ENCODE measurements at regions of chr5 and their contacts with region 1.

Region 1: DNA sequence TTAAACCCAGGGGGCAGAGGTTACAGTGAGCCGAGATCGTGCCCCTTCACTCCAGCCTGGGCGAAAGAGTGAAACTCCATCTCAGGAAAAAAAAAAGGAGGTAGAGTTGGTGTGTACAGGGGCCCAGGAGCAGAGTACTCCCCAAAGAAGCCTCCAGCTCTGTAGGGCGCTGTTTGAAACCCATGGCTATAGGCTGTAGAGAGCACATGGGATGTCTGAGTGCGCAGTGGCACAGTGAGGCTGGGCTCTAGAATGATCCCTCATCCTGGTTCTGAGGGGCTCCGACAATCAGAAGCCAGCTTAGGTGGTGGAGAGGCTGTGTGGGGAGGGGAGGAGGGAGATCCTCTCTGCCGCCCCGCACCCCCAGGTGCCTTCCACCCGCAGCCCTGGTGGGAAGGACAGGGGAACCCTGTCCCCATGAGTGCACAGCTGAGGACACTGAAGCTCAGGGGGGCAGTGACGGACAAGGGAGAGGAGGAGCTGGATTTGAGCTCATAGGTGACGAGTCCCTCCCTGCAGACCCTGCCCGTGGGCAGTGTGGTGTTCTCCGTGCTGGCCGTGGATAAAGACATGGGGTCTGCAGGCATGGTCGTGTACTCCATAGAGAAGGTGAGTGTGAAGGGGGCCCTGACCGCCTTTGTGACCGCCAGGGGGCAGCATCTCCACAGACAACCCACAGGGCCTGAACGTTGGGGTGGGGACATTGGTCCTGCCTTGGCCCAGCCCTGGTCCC is 24.6 kb downstream of the CDHR2 start:
- DNase-seq: peak; percentile 61 to 84 (median 70)
- H3K4me3 ChIP-seq: no peak overlapping the region
- H3K4me3 Mint-ChIP-seq: peak overlapping the region in 1 of 7 donors; percentile 34
- H3K27ac ChIP-seq: no peak overlapping the region
- H3K27ac Mint-ChIP-seq: peak overlapping the region in 2 of 8 donors; percentile 20 to 74
- H3K4me1 ChIP-seq: no peaks in the 10 kb centered on the region
- H3K4me1 Mint-ChIP-seq: peaks cover 4 to 11% (median 5%) of the 10 kb centered on the region in 3 donors
- H3K27me3 ChIP-seq: no peaks in the 10 kb centered on the region
- H3K27me3 Mint-ChIP-seq: peaks cover 10 to 12% of the 10 kb centered on the region in 2 donors

Region 2: GRCh38 chr5:176415952-176416924 is 157.5 kb before region 1 on chr5 and contains the start of gene CLTB:
- CTCF ChIA-PET with region 1: interaction called, 67 read pairs
- POLR2A ChIA-PET with region 1: no interaction called
- DNase-seq: peak; percentile 82 to 93 (median 90)
- H3K4me3 ChIP-seq: peak within 1 kb of the TSS; percentile 82
- H3K4me3 Mint-ChIP-seq: peak within 1 kb of the TSS; percentile 81 to 92 (median 89)
- H3K27ac ChIP-seq: peak within 1 kb of the TSS; percentile 71
- H3K27ac Mint-ChIP-seq: peak within 1 kb of the TSS; percentile 81 to 96 (median 93)
- H3K4me1 ChIP-seq: peaks cover 25% of the 10 kb centered on the region
- H3K4me1 Mint-ChIP-seq: peaks cover 41 to 51% (median 42%) of the 10 kb centered on the region in 3 donors
- H3K27me3 ChIP-seq: no peaks in the 10 kb centered on the region
- H3K27me3 Mint-ChIP-seq: no peaks in the 10 kb centered on the region
- total RNA-seq, gene CLTB: 62.0 to 66.4 TPM

Region 3: GRCh38 chr5:176537608-176538504 is 35.9 kb before region 1 on chr5:
- CTCF ChIA-PET with region 1: interaction called, 15 read pairs
- POLR2A ChIA-PET with region 1: no interaction called
- DNase-seq: peak; percentile 96 to 99 (median 97)
- H3K4me3 ChIP-seq: peak overlapping the region; percentile 99
- H3K4me3 Mint-ChIP-seq: peak overlapping the region; percentile 98 to 100 (median 99)
- H3K27ac ChIP-seq: peak overlapping the region; percentile 100
- H3K27ac Mint-ChIP-seq: peak overlapping the region; percentile 98 to 100 (median 99)
- H3K4me1 ChIP-seq: peaks cover 74% of the 10 kb centered on the region
- H3K4me1 Mint-ChIP-seq: peaks cover 72 to 77% (median 76%) of the 10 kb centered on the region in 3 donors
- H3K27me3 ChIP-seq: no peaks in the 10 kb centered on the region
- H3K27me3 Mint-ChIP-seq: peaks cover 0 to 9% of the 10 kb centered on the region in 2 donors

Region 4: DNA sequence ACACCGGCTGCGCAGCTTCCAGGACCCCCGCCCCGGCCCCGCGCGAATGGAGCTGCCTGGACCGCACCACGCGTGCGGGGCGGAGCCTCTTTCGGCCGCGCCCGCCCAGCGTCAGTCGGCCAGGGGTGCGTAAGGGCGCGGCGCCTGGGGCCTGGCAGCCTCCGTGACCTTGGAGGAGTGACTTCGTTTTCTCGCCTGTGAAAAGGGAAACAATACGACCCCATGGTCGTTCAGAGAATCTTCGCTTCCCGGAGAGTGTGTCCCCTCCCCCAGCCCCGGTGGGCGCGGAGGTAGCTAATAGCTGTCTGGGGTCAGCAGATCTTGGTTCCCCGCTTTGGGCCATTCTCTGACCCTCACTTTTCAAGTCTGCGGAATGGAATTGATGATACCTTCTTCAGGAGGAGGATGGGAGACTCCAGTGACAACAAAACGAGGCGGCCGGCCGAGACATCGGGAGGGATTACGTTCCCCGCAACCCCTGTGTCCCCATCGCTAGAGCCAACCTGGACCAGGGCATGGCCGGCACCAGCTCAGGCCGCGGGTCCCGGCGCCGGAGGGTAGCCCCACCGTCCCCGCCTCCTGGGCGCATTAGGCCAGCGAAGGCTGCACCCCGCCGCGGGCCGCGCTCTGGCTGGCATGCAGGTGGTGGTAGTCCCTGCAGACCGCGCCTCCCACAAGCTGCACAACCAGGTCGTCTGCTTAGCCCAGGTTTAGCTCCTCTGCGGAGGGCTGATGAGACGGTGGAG is 30.1 kb before region 1 on chr5:
- CTCF ChIA-PET with region 1: interaction called, 14 read pairs
- POLR2A ChIA-PET with region 1: interaction called, 4 read pairs
- DNase-seq: peak; percentile 60 to 82 (median 74)
- H3K4me3 ChIP-seq: peak overlapping the region; percentile 92
- H3K4me3 Mint-ChIP-seq: peak overlapping the region; percentile 92 to 97 (median 93)
- H3K27ac ChIP-seq: peak overlapping the region; percentile 85
- H3K27ac Mint-ChIP-seq: peak overlapping the region; percentile 96 to 99 (median 98)
- H3K4me1 ChIP-seq: peaks cover 69% of the 10 kb centered on the region
- H3K4me1 Mint-ChIP-seq: peaks cover 65 to 82% (median 74%) of the 10 kb centered on the region in 3 donors
- H3K27me3 ChIP-seq: no peaks in the 10 kb centered on the region
- H3K27me3 Mint-ChIP-seq: peaks cover 0 to 1% of the 10 kb centered on the region in 2 donors

Region 5: DNA sequence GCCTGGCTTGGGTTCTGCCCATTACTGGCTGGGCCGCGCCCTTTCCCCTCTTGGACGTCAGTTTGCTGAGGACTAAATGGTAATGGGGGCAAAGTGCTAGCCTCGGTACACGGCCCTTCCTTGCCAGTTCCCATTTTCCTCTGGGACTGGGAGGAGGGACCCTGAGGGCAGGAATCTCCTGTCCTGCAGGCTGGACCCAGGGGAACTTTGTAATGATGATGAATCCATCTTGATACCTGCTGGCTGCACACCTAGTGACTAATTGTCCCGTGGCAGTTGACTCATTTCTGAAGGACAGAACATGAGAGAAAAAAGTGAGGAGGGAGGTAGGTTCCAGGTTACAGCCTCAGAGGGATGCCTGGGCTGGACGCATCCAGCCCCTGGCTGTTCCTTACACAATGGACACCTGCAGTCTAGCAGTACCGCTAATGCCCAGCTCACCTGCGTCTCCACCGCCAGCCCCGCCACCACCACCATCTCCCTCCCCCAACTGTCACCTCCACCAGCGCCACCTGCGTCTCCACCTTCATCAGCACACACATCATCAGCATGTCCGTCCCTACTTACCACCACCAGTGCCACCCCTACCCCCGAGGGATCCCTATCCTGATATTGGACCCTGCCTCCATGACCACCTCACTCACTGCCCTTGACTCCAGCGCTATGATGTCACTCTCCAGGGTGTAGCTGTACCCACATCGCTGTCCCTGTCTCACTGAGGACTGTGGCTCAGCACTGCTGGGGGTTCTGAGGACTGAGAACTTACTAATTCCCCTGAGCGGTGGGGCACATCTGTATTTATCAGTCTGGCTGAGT is 20.3 kb before region 1 on chr5:
- CTCF ChIA-PET with region 1: interaction called, 10 read pairs
- POLR2A ChIA-PET with region 1: no interaction called
- DNase-seq: no peak
- H3K4me3 ChIP-seq: no peak overlapping the region
- H3K4me3 Mint-ChIP-seq: peak overlapping the region in 3 of 7 donors; percentile 14 to 61 (median 38)
- H3K27ac ChIP-seq: no peak overlapping the region
- H3K27ac Mint-ChIP-seq: peak overlapping the region in 7 of 8 donors; percentile 33 to 95 (median 47)
- H3K4me1 ChIP-seq: peaks cover 53% of the 10 kb centered on the region
- H3K4me1 Mint-ChIP-seq: peaks cover 37 to 65% (median 39%) of the 10 kb centered on the region in 3 donors
- H3K27me3 ChIP-seq: no peaks in the 10 kb centered on the region
- H3K27me3 Mint-ChIP-seq: no peaks in the 10 kb centered on the region

Region 6: DNA sequence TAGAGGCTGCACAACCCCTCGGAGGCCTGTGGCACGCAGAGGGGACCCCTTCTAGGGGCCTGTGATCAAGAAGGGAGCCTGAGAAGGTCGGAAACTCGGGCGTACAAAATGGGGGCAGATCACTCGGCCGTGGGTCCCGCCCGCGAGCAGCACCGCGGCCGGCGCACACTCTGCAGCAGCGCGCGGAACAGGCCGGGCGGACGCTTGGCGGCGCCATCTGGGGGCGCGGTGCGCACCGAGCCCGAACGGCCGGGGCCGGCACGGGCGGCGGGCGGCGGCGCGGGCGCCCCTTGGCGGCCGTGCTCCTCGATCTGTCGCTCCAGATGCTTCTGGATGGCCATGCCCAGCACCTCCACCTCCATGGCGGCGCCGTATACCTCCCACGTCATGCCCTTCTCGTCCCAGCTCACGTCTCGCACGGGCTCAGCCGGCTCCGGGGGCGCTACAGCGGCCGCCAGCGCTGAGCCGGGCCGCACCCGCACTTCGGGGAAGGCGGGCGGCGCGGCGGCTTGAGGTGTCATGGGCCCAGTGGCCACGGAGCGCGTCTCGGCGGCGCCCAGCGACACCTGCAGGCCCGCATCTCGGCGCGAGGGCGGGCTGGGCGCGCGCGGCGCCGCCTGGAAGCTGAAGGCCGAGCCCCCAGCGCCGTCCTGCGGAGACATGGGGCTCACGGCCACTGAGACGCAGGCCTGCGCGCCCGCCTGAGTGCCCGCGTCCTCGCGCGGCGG is 23.1 kb after region 1 on chr5:
- CTCF ChIA-PET with region 1: interaction called, 11 read pairs
- POLR2A ChIA-PET with region 1: no interaction called
- DNase-seq: peak; percentile 44 to 76 (median 70)
- H3K4me3 ChIP-seq: peak overlapping the region; percentile 37
- H3K4me3 Mint-ChIP-seq: peak overlapping the region; percentile 64 to 84 (median 78)
- H3K27ac ChIP-seq: no peak overlapping the region
- H3K27ac Mint-ChIP-seq: peak overlapping the region in 2 of 8 donors; percentile 52 to 70
- H3K4me1 ChIP-seq: peaks cover 6% of the 10 kb centered on the region
- H3K4me1 Mint-ChIP-seq: peaks cover 3 to 9% (median 6%) of the 10 kb centered on the region in 3 donors
- H3K27me3 ChIP-seq: no peaks in the 10 kb centered on the region
- H3K27me3 Mint-ChIP-seq: peaks cover 2 to 4% of the 10 kb centered on the region in 2 donors

Region 7: DNA sequence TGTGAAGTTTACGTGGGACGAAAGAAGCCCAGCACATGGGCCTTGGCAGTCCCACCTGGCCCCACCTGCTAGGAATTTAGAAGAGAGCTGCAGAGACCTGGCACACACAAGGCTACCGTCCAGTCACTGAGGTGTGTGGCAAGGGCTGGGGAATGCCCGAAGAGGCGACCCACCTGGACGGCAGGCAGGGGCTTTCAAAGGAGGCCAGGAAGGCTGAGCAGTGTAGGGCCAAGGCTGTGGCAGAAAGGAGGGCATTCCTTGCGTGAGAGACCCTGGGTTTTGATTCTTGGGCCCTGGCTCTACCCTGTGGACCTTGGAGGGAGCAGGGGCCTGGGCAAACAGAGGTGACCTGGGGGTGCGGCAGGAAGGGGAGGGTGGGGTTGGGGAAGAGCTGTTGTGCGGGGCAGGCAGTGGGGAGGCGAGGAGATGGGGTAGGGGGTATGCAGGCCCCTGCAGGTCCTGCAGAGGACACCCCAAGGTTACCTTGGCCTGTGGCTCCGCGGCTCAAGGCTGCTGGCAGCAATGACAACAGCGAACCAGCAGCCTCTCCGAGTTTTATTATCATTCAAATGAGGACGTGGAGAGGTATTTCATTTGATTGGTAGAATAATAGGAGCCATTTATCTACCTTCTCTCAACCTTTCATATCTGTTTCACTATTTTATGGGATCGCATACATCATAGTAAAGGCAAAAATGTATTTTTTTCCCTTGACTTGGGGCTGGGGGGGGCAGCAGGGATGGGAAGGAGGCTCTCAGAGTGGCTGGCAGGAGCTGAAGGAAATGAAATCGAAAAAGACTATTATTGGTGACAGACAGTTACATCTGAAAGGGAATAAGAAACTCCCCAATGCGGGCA is 98.4 kb after region 1 on chr5:
- CTCF ChIA-PET with region 1: no interaction called
- POLR2A ChIA-PET with region 1: no interaction called
- DNase-seq: no peak
- H3K4me3 ChIP-seq: no peak overlapping the region
- H3K4me3 Mint-ChIP-seq: no peak overlapping the region
- H3K27ac ChIP-seq: no peak overlapping the region
- H3K27ac Mint-ChIP-seq: no peak overlapping the region
- H3K4me1 ChIP-seq: no peaks in the 10 kb centered on the region
- H3K4me1 Mint-ChIP-seq: no peaks in the 10 kb centered on the region
- H3K27me3 ChIP-seq: peaks cover 3% of the 10 kb centered on the region
- H3K27me3 Mint-ChIP-seq: peaks cover 21 to 44% of the 10 kb centered on the region in 2 donors

Measured in CD8-positive, alpha-beta memory T cell (primary cell).